ENCODE measurements at regions of chr16 and their contacts with region 1.

Region 1: DNA sequence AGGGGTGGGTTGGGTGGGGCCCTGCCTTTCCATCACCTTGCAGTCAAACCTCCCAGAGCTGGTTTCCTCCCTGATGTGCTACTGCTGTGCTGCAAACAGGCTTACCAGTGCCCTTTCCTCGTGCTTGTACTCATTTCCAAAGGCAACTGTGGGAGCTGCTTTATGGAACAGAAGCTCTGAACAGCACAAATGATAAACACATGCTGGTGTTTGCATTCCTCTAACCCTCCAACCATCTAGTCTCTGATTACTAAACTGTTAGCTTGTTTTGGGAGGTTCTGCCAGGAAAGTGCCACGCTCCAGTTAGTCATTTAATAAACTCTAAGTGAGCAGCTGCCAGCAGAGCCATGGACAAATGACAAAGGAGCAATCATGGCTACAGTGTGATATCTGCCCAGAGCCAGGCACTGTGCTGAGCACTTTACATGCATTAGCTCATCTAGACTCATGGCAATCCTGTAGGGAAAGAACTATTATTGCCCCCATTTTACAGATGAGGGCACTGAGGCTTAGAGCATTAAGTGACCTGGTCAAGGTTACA is 110.4 kb downstream of the VAT1L start:
- DNase-seq: peak; percentile 89
- ATAC-seq: peak; percentile 89
- H3K4me3 ChIP-seq: no peak overlapping the region
- H3K27ac ChIP-seq: peak overlapping the region; percentile 83
- H3K4me1 ChIP-seq: peaks cover 27% of the 10 kb centered on the region
- H3K27me3 ChIP-seq: no peaks in the 10 kb centered on the region
- CTCF ChIP-seq: no peak
- POLR2A ChIP-seq: no peak
- RAD21 ChIP-seq: no peak

Region 2: DNA sequence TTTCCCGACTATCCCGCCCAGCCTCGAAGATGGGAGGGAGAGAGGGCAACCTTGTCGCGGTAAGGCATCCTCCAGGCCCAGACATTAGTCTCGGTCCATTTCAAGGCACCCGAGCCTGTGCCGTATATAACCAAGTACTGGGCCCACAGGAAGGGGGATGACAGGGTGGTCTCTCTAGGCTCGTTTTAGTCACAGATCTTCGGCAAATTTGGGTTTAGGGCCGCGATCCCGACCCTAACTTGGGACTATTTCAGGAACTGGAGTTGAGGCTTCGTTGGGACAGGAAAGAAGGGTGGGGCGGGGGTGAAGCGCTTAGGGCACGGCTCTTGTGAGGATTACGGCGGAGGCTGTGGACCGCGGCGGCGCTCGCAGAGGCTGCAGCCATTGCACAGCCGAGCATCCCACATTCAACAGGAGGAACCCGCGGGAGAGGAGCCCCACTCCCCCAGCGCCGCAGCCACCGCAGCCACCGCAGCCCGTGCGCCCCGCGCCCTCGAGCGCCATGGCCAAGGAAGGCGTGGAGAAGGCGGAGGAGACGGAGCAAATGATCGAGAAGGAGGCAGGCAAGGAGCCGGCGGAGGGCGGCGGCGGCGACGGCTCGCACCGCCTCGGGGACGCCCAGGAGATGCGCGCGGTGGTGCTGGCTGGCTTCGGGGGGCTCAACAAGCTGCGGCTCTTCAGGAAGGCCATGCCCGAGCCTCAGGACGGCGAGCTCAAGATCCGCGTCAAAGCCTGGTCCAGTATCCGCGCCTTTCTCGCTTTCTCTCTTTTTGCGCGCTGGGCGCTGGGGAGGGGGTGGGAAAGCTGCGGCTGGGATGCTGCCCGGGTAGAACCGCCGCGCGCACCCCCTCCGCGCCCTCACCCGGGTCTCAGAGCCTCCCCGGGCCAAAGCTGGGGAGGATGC is 110.3 kb before region 1 on chr16 and contains the start of gene VAT1L:
- CTCF ChIA-PET with region 1: no interaction called
- POLR2A ChIA-PET with region 1: no interaction called
- dilution Hi-C with region 1: no loop called
- in situ Hi-C with region 1: no loop called
- intact Hi-C with region 1: loop called (anchors 2 kb)
- DNase-seq: peak; percentile 63
- ATAC-seq: peak; percentile 93
- H3K4me3 ChIP-seq: peak within 1 kb of the TSS; percentile 93
- H3K27ac ChIP-seq: peak within 1 kb of the TSS; percentile 25; the same call in 1 of the 2 replicates
- H3K4me1 ChIP-seq: peaks cover 9% of the 10 kb centered on the region
- H3K27me3 ChIP-seq: peaks cover 4% of the 10 kb centered on the region; the same call in 1 of the 2 replicates
- CTCF ChIP-seq: no peak
- POLR2A ChIP-seq: no peak
- RAD21 ChIP-seq: no peak
- total RNA-seq, gene VAT1L: 18.1 and 18.5 TPM in 2 replicates

Measured in IMR-90 (cell line).